ENCODE measurements at regions of chr12 and their contacts with region 1.

Region 1: GRCh38 chr12:51823875-51824565 is 24.5 kb downstream of the FIGNL2 start:
- DNase-seq: peak in 5 of 14 experiments; percentile 8 to 76 (median 56)
- ATAC-seq: no peak
- H3K4me3 ChIP-seq: no peak overlapping the region
- H3K4me3 Mint-ChIP-seq: peak overlapping the region; percentile 85
- H3K27ac ChIP-seq: no peak overlapping the region
- H3K27ac Mint-ChIP-seq: peak overlapping the region; percentile 66
- H3K4me1 ChIP-seq: peaks cover 45% of the 10 kb centered on the region
- H3K4me1 Mint-ChIP-seq: peaks cover 38% of the 10 kb centered on the region
- H3K27me3 ChIP-seq: no peaks in the 10 kb centered on the region
- H3K27me3 Mint-ChIP-seq: peaks cover 4% of the 10 kb centered on the region
- CTCF ChIP-seq: peak; percentile 43

Region 2: GRCh38 chr12:51590347-51591019 is 233.5 kb before region 1 on chr12:
- CTCF ChIA-PET with region 1: no interaction called
- POLR2A ChIA-PET with region 1: no interaction called
- intact Hi-C with region 1: no loop called
- DNase-seq: peak; percentile 44 to 88 (median 64)
- ATAC-seq: peak; percentile 88
- H3K4me3 ChIP-seq: peak overlapping the region; percentile 51
- H3K4me3 Mint-ChIP-seq: peak overlapping the region; percentile 86
- H3K27ac ChIP-seq: no peak overlapping the region
- H3K27ac Mint-ChIP-seq: no peak overlapping the region
- H3K4me1 ChIP-seq: peaks cover 16% of the 10 kb centered on the region
- H3K4me1 Mint-ChIP-seq: peaks cover 23% of the 10 kb centered on the region
- H3K27me3 ChIP-seq: peaks cover 31 to 40% of the 10 kb centered on the region in 2 experiments
- H3K27me3 Mint-ChIP-seq: peaks cover 68% of the 10 kb centered on the region
- CTCF ChIP-seq: no peak

Region 3: DNA sequence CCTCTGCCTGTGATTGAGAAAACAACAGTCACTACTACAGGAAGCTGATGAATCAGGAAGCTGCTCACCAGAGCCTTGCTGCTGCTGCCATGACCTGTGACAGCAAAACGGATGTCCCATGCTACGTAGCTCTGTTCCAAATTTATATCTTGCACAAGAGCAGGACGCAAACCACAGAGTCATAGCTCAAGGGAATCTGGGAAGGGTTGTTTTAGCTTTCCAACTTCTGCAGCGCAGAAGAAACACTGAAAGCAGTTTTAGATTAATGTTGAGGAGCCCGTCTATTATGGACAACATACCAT is 62.0 kb after region 1 on chr12:
- CTCF ChIA-PET with region 1: no interaction called
- POLR2A ChIA-PET with region 1: interaction called, 15 read pairs
- intact Hi-C with region 1: no loop called
- DNase-seq: peak; percentile 9 to 79 (median 42)
- ATAC-seq: peak; percentile 99
- H3K4me3 ChIP-seq: no peak overlapping the region
- H3K4me3 Mint-ChIP-seq: peak overlapping the region; percentile 23
- H3K27ac ChIP-seq: no peak overlapping the region
- H3K27ac Mint-ChIP-seq: peak overlapping the region; percentile 94
- H3K4me1 ChIP-seq: peaks cover 11% of the 10 kb centered on the region
- H3K4me1 Mint-ChIP-seq: peaks cover 21% of the 10 kb centered on the region
- H3K27me3 ChIP-seq: peaks cover 0 to under 1% of the 10 kb centered on the region in 2 experiments
- H3K27me3 Mint-ChIP-seq: no peaks in the 10 kb centered on the region
- CTCF ChIP-seq: no peak

Region 4: DNA sequence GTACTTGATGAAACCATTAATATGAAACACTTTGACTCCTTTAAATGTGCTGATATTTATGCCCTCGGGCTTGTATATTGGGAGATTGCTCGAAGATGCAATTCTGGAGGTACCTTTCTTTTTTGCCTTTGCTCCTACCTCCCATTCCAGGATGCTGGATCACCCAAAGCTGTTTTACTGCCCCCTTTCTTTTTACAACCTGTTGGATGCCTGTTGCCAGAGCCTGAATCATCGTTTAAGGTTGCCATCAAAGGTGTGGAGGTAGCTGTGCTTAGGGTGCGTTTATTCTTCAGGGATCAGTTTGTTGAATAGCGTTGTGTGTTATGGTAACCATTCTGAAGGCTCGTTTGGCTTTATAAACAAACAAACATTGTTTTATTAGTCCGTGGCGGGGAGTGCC is 162.8 kb after region 1 on chr12:
- CTCF ChIA-PET with region 1: no interaction called
- POLR2A ChIA-PET with region 1: no interaction called
- intact Hi-C with region 1: no loop called
- DNase-seq: no peak
- ATAC-seq: no peak
- H3K4me3 ChIP-seq: no peak overlapping the region
- H3K4me3 Mint-ChIP-seq: no peak overlapping the region
- H3K27ac ChIP-seq: no peak overlapping the region
- H3K27ac Mint-ChIP-seq: no peak overlapping the region
- H3K4me1 ChIP-seq: no peaks in the 10 kb centered on the region
- H3K4me1 Mint-ChIP-seq: no peaks in the 10 kb centered on the region
- H3K27me3 ChIP-seq: no peaks in the 10 kb centered on the region
- H3K27me3 Mint-ChIP-seq: no peaks in the 10 kb centered on the region
- CTCF ChIP-seq: no peak